ENCODE measurements at regions of chr5 and their contacts with region 1.

Region 1: GRCh38 chr5:124941393-124942049 is 195.1 kb upstream of the ZNF608 start:
- DNase-seq: no peak
- H3K4me3 ChIP-seq: no peak overlapping the region
- H3K27ac ChIP-seq: no peak overlapping the region
- H3K4me1 ChIP-seq: no peaks in the 10 kb centered on the region
- CTCF ChIP-seq: no peak

Region 2: DNA sequence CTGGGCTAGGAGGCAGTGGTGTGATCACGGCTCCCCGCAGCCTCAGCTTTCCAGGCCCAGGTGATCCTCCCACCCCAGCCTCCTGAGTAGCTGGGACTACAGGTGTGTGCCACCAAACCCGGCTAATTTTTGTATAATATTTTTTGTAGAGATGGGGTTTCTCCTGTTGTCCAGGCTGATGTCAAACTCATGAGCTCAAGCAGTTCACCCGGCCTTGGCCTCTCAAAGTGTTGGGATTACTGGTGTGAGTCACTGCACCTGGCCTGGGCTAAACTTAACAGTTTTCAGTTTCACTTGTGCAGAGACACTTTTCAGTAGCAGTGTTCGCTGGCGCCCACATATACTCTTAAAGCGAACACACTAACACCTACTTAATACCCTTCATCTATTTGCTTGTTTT is 10.6 kb after region 1 on chr5:
- CTCF ChIA-PET with region 1: no interaction called
- POLR2A ChIA-PET with region 1: interaction called, 13 read pairs
- intact Hi-C with region 1: no loop called
- DNase-seq: peak; percentile 61
- H3K4me3 ChIP-seq: peak overlapping the region; percentile 38
- H3K27ac ChIP-seq: peak overlapping the region; percentile 56
- H3K4me1 ChIP-seq: peaks cover 22% of the 10 kb centered on the region
- CTCF ChIP-seq: no peak